Activated CD8-positive, alpha-beta T cell treated with anti-CD3 and anti-CD28 coated beads, Interleukin-2, amount 10 ng/mL, durations not matched to agents 7 days and 5 days (primary cell): ENCODE measurements at regions of chrX and their contacts with region 1.

Region 1: DNA sequence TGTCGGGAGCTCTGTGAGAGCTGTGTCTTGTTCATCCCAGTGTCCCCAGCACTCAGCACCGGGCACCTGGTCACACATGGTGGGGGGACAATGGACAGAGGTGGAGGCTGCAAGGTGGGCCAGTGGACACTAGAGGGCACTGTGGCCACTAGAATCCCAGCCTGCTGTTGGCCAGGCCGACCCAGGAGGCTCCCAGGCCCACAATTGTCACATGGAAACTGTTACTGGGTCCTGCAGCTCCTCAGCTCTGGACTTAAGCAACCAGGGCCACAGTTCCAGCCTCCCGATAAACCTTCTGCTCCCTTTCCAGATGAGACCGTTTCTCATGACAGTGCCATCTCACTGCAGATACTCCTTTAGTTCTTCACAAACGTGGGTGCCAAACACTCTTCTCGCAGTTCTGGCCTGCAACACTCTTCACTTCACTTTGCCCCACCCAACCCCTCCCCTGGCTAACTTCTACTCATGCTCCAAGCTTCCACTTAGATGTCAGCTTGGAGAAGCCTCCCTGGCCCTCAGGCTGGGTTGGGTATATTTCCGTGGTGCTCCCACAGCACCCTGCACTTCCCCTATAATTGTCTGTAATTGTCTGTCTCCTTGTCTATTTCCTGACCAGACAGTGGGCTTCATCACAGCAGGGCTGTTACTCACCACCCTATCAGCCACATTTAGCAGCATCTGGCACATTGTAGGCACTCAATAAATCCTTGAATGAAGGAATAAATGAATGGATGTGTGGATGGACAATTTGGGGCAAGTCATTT is 3.5 kb upstream of the IQSEC2 start:
- DNase-seq: peak; percentile 56
- ATAC-seq: peak; percentile 46
- H3K4me3 Mint-ChIP-seq: peak overlapping the region; percentile 18
- H3K27ac Mint-ChIP-seq: peak overlapping the region; percentile 49
- H3K4me1 Mint-ChIP-seq: peaks cover 37% of the 10 kb centered on the region
- H3K27me3 Mint-ChIP-seq: no peaks in the 10 kb centered on the region

Region 2: DNA sequence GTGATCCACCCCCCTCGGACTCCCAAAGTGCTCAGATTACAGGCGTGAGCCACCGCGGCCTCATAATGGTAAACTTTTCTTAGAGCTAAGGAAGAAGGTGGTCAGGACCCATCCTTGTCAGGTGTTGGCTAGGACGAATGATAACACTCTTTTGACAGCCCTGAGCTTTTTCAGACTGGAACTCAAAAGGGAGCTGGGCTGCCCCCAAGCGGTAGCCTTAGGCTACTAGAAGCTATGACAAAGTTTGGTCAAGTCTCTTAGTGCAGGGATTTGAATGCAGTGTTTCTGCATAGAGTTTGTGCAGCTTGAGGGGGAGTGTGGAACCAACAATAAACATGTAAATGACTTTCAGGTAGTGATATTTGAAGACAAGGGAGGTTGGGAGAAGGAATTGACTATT is 161.1 kb after region 1 on chrX:
- CTCF ChIA-PET with region 1: interaction called, 11 read pairs
- POLR2A ChIA-PET with region 1: no interaction called
- DNase-seq: peak; percentile 64
- ATAC-seq: no peak
- H3K4me3 Mint-ChIP-seq: no peak overlapping the region
- H3K27ac Mint-ChIP-seq: no peak overlapping the region
- H3K4me1 Mint-ChIP-seq: peaks cover 11% of the 10 kb centered on the region
- H3K27me3 Mint-ChIP-seq: no peaks in the 10 kb centered on the region